ENCODE measurements at regions of chr9 and their contacts with region 1.

Region 1: DNA sequence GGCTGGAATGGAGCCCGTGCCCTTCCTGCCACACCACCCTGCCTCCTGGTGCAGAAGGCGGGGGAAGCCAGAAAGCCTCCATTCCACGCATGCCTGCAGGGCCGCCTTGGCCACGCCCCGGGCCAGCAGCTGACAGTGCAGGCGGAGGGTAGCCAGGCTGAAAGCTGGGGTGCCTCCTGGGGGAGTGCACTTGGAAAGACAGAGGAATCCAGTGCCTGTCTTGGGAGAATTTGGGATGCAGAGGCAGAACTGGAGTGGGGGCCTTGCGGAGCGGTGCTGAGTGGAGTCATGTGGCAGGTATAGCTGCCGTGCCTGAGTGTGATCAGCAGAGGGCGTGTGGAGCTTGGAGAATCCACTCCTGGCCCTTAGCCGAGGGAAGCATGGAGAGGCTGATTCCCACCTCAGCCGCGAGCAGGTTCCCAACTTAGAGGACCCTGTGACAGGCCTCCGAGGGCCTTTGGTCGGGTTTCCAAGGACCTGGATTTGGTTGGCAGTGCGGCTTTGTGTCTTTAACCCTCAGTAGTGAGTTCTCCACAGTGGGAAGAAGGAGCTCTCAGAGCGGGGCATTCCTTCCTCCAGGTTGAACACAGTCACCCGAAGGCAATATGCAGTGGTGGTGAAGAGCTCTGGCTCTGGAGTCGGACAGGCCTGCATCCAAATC is 9.1 kb upstream of the URM1 start:
- DNase-seq: peak; percentile 82 to 85
- H3K4me3 ChIP-seq: peak overlapping the region; percentile 34
- H3K4me3 Mint-ChIP-seq: peak overlapping the region; percentile 81
- H3K27ac Mint-ChIP-seq: peak overlapping the region; percentile 83
- H3K4me1 ChIP-seq: peaks cover 8% of the 10 kb centered on the region; the same call in 1 of the 2 replicates
- H3K4me1 Mint-ChIP-seq: peaks cover 7% of the 10 kb centered on the region
- H3K27me3 ChIP-seq: no peaks in the 10 kb centered on the region
- H3K27me3 Mint-ChIP-seq: no peaks in the 10 kb centered on the region
- CTCF ChIP-seq: peak; percentile 82 to 89

Region 2: DNA sequence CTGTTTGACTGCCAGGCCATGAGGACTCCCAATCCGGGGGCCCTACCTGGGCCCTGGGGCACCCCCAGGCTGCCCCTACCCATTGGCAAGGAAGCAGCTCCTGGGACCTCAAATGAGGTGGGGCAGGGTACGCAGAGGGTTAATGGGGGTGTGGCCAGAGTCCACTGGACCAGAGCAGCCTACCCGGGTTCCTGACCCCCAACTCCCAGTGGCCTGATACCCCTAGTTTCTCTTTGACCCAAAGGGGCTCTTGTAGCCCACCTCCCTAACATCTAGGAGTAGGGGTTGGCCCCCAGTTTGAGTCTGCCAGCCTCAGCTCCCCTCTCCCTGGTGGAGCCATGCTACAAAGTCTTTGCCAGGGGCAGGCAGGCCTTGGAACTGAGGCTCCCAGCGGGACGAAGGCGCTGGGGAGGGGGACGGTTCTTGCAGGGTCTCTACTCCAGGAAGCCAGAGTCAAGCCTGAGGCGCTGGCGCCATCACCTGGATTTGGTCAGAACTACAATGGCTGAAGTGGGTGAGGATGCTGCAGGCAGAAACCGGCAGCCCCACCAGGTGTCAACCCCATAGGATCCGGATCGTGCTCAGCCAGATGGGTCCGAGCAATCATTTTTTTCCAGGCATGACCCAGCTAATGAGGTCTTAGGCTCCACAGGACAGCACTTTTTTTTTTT is 50.1 kb after region 1 on chr9:
- CTCF ChIA-PET with region 1: interaction called, 31 read pairs
- POLR2A ChIA-PET with region 1: no interaction called
- intact Hi-C with region 1: loop called (anchors 1 kb)
- DNase-seq: peak; percentile 82 to 85
- H3K4me3 ChIP-seq: no peak overlapping the region
- H3K4me3 Mint-ChIP-seq: no peak overlapping the region
- H3K27ac Mint-ChIP-seq: no peak overlapping the region
- H3K4me1 ChIP-seq: peaks cover 17% of the 10 kb centered on the region
- H3K4me1 Mint-ChIP-seq: peaks cover 24% of the 10 kb centered on the region
- H3K27me3 ChIP-seq: no peaks in the 10 kb centered on the region
- H3K27me3 Mint-ChIP-seq: no peaks in the 10 kb centered on the region
- CTCF ChIP-seq: peak; percentile 61 to 70

Measured in Caco-2 (cell line).